ENCODE measurements at regions of chr11 and their contacts with region 1.

Region 1: GRCh38 chr11:128624269-128625175 is 37.2 kb upstream of the ETS1 start:
- H3K4me3 Mint-ChIP-seq: no peak overlapping the region
- H3K27ac Mint-ChIP-seq: no peak overlapping the region
- H3K4me1 Mint-ChIP-seq: peaks cover 25% of the 10 kb centered on the region
- H3K27me3 Mint-ChIP-seq: peaks cover 13% of the 10 kb centered on the region

Region 2: GRCh38 chr11:128522055-128522942 is 102.2 kb before region 1 on chr11:
- intact Hi-C with region 1: loop called (anchors 5 kb)
- H3K4me3 Mint-ChIP-seq: peak overlapping the region; percentile 86
- H3K27ac Mint-ChIP-seq: peak overlapping the region; percentile 88
- H3K4me1 Mint-ChIP-seq: peaks cover 35% of the 10 kb centered on the region
- H3K27me3 Mint-ChIP-seq: peaks cover 12% of the 10 kb centered on the region

Measured in dendritic cell treated with granulocyte-macrophage colony-stimulating factor and Interleukin-4, amounts not matched to agents 40 ng/mL and 50 ng/mL, for 4 days (primary cell).